Activated B cell treated with CpG ODN at 0.5 μM for 24 hours (primary cell): ENCODE measurements at regions of chr15 and their contacts with region 1.

Region 1: GRCh38 chr15:79380755-79381497 is 51.2 kb upstream of the MINAR1 start:
- DNase-seq: peak; percentile 59
- ATAC-seq: peak; percentile 68
- H3K4me3 Mint-ChIP-seq: no peak overlapping the region
- H3K27ac Mint-ChIP-seq: no peak overlapping the region
- H3K4me1 Mint-ChIP-seq: no peaks in the 10 kb centered on the region
- H3K27me3 Mint-ChIP-seq: no peaks in the 10 kb centered on the region
- CTCF ChIP-seq: peak; percentile 66

Region 2: GRCh38 chr15:79394231-79394630 is 13.3 kb after region 1 on chr15:
- CTCF ChIA-PET with region 1: interaction called, 12 read pairs
- POLR2A ChIA-PET with region 1: no interaction called
- intact Hi-C with region 1: no loop called
- DNase-seq: no peak
- ATAC-seq: no peak
- H3K4me3 Mint-ChIP-seq: no peak overlapping the region
- H3K27ac Mint-ChIP-seq: no peak overlapping the region
- H3K4me1 Mint-ChIP-seq: no peaks in the 10 kb centered on the region
- H3K27me3 Mint-ChIP-seq: no peaks in the 10 kb centered on the region
- CTCF ChIP-seq: no peak

Region 3: DNA sequence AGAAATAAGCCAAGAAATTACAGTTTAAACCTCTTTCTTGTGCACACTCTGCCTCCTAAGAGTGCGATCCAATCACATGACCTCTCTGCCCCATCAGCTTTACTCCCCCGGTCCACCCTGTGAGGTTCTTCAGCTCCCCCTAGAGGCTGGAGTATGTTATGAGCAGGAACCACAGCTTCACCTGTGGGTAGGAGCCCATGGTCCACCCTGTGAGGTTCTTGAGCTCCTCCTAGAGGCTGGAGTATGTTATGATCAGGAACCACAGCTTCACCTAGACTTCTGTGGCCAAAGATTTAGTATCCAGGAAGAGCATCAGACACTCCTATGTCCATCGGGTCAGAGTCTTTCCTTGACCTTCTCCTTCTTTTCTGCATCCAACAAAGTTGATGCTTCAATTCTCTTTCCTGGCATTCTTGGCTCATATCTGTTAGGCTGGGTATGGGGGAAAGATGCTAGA is 215.2 kb after region 1 on chr15:
- CTCF ChIA-PET with region 1: interaction called, 8 read pairs
- POLR2A ChIA-PET with region 1: no interaction called
- intact Hi-C with region 1: loop called (anchors 1 kb)
- DNase-seq: no peak
- ATAC-seq: peak; percentile 85
- H3K4me3 Mint-ChIP-seq: no peak overlapping the region
- H3K27ac Mint-ChIP-seq: no peak overlapping the region
- H3K4me1 Mint-ChIP-seq: no peaks in the 10 kb centered on the region
- H3K27me3 Mint-ChIP-seq: peaks cover 16% of the 10 kb centered on the region
- CTCF ChIP-seq: no peak

Region 4: DNA sequence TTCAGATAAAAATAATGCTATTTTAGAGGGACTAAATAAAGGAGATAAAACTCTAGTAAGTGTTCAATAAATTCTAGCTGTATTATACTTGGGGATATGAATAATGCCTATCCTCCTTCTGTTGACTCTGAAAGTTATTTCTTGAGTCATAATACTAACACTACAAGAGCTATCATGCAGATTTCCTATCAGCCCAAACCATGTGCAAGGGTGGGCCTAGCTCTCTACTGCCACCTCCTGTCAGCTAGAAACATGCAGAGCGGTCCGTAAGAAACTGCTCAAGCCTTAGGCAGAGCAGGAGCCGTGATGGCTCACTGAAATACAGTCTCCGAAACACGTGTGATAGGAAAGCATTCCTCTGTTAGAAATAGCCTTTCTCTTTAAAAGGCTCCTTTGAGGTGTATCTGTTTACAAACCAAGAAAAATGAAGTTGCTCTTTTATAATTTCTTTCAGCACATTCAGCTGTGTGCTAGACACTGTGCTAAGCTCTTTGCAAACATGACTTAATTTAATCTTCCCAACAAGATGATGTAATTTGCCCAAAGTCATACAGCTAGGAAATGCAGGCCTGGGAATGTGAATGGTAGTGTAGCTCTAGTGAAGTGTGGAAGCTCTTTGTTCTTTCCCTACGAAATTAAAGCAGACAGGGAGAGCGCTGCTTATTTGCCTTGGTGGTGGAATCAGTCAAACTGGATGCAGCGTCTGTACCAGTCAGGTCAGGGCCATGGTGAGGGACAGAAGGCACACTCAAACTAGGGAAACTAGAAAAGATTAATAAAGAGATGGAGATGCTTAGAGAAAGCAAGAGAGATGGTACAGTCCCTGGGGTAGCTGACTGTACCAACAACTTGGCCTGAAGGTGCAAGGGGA is 472.8 kb after region 1 on chr15:
- CTCF ChIA-PET with region 1: interaction called, 145 read pairs
- POLR2A ChIA-PET with region 1: no interaction called
- intact Hi-C with region 1: loop called (anchors 1 kb)
- DNase-seq: peak; percentile 20
- ATAC-seq: peak; percentile 99
- H3K4me3 Mint-ChIP-seq: no peak overlapping the region
- H3K27ac Mint-ChIP-seq: no peak overlapping the region
- H3K4me1 Mint-ChIP-seq: peaks cover 23% of the 10 kb centered on the region
- H3K27me3 Mint-ChIP-seq: no peaks in the 10 kb centered on the region
- CTCF ChIP-seq: peak; percentile 76

Region 5: GRCh38 chr15:79896637-79897379 is 515.9 kb after region 1 on chr15 and contains the start of gene MTHFS:
- CTCF ChIA-PET with region 1: interaction called, 10 read pairs
- POLR2A ChIA-PET with region 1: no interaction called
- intact Hi-C with region 1: no loop called
- DNase-seq: peak; percentile 76
- ATAC-seq: peak; percentile 87
- H3K4me3 Mint-ChIP-seq: peak within 1 kb of the TSS; percentile 99
- H3K27ac Mint-ChIP-seq: peak within 1 kb of the TSS; percentile 100
- H3K4me1 Mint-ChIP-seq: peaks cover 54% of the 10 kb centered on the region
- H3K27me3 Mint-ChIP-seq: no peaks in the 10 kb centered on the region
- CTCF ChIP-seq: no peak
- total RNA-seq, gene MTHFS: 28.6 and 29.5 TPM in 2 replicates

Region 6: GRCh38 chr15:80173022-80173759 is 792.3 kb after region 1 on chr15:
- CTCF ChIA-PET with region 1: interaction called, 76 read pairs
- POLR2A ChIA-PET with region 1: no interaction called
- intact Hi-C with region 1: no loop called
- DNase-seq: peak; percentile 59
- ATAC-seq: peak; percentile 85
- H3K4me3 Mint-ChIP-seq: no peak overlapping the region
- H3K27ac Mint-ChIP-seq: peak overlapping the region; percentile 35
- H3K4me1 Mint-ChIP-seq: no peaks in the 10 kb centered on the region
- H3K27me3 Mint-ChIP-seq: no peaks in the 10 kb centered on the region
- CTCF ChIP-seq: no peak

Region 7: GRCh38 chr15:80309769-80310384 is 929.0 kb after region 1 on chr15:
- CTCF ChIA-PET with region 1: interaction called, 3 read pairs
- POLR2A ChIA-PET with region 1: no interaction called
- intact Hi-C with region 1: loop called (anchors 5 kb)
- DNase-seq: no peak
- ATAC-seq: no peak
- H3K4me3 Mint-ChIP-seq: no peak overlapping the region
- H3K27ac Mint-ChIP-seq: no peak overlapping the region
- H3K4me1 Mint-ChIP-seq: no peaks in the 10 kb centered on the region
- H3K27me3 Mint-ChIP-seq: peaks cover 21% of the 10 kb centered on the region
- CTCF ChIP-seq: no peak